Right cardiac atrium (tissue), 5 donors: ENCODE measurements at regions of chr11 and their contacts with region 1.

Region 1: GRCh38 chr11:111878849-111879636 is at the starts of genes CFAP68 and FDXACB1:
- DNase-seq: peak; percentile 96 to 98 (median 97)
- ATAC-seq: peak; percentile 97 to 98
- H3K4me3 ChIP-seq: peak within 1 kb of the TSS; percentile 64
- H3K27ac ChIP-seq: peak within 1 kb of the TSS; percentile 78
- H3K4me1 ChIP-seq: no peaks in the 10 kb centered on the region
- H3K27me3 ChIP-seq: no peaks in the 10 kb centered on the region
- total RNA-seq, gene CFAP68: 22.8 to 51.1 (median 32.0) TPM
- total RNA-seq, gene FDXACB1: 1.6 to 1.7 (median 1.6) TPM

Region 2: GRCh38 chr11:111911563-111912401 is 32.7 kb after region 1 on chr11 and contains the start of gene CRYAB:
- intact Hi-C with region 1: loop called in 1 of 4 experiments (anchors 5 kb)
- DNase-seq: peak; percentile 91 to 96 (median 95)
- ATAC-seq: peak; percentile 85 to 87
- H3K4me3 ChIP-seq: peak within 1 kb of the TSS; percentile 87
- H3K27ac ChIP-seq: peak within 1 kb of the TSS; percentile 96
- H3K4me1 ChIP-seq: no peaks in the 10 kb centered on the region
- H3K27me3 ChIP-seq: no peaks in the 10 kb centered on the region
- total RNA-seq, gene CRYAB: 4,923 to 5,929 (median 5,581) TPM

Region 3: DNA sequence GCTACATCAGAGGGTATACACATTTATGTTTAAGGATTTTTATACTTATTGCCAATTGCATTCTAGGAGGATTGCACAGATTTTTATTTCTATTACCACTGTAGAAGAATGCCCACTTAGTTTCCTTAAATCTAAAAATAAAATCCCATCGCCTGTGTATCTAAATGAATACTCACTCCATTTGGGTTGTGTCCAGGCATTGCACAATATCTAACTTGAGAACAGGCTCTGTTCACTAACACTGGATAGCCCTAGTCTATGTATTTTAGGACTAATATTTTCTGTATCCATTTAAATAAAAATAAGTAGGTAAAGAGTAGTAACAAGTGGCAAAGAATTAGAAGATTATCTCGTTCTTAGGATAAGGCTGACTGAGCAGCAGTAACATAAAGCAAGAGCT is 43.8 kb after region 1 on chr11:
- intact Hi-C with region 1: loop called in 1 of 4 experiments (anchors 5 kb)
- DNase-seq: no peak
- ATAC-seq: peak; percentile 17 to 19
- H3K4me3 ChIP-seq: peak overlapping the region; percentile 29
- H3K27ac ChIP-seq: peak overlapping the region; percentile 99
- H3K4me1 ChIP-seq: peaks cover 14% of the 10 kb centered on the region
- H3K27me3 ChIP-seq: no peaks in the 10 kb centered on the region

Region 4: DNA sequence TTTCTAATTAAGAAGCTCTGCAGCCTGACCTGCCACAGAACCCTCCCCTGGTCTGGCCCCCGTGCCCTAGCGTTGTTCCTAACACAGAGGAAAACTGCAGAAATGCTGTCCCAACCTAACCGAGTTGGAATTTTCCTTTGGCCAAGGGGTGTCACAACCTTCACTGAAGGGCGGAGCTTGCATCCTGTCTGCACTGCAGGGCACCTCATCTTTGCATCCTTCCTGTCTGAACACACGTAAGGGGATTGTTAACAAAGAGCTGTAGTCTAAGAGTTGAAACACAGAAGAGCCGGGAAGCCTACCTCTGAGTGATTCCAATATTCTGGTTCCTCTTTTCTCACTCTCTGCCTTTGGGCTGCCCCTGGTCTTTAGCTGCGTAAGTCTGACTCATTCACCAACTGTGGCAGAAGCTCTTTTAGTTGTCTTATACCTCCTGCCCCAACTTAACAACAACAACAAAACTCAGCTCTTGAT is 59.7 kb after region 1 on chr11:
- intact Hi-C with region 1: loop called in 2 of 4 experiments (anchors 10 kb)
- DNase-seq: no peak
- ATAC-seq: peak; percentile 7 to 64
- H3K4me3 ChIP-seq: no peak overlapping the region
- H3K27ac ChIP-seq: peak overlapping the region; percentile 40
- H3K4me1 ChIP-seq: peaks cover 15% of the 10 kb centered on the region
- H3K27me3 ChIP-seq: no peaks in the 10 kb centered on the region

Region 5: GRCh38 chr11:111982019-111982464 is 103.0 kb after region 1 on chr11:
- intact Hi-C with region 1: loop called in 3 of 4 experiments (anchors 5 kb)
- DNase-seq: peak; percentile 31 to 74 (median 57)
- ATAC-seq: peak in 1 of 2 donors; percentile 30
- H3K4me3 ChIP-seq: no peak overlapping the region
- H3K27ac ChIP-seq: no peak overlapping the region
- H3K4me1 ChIP-seq: peaks cover 1% of the 10 kb centered on the region
- H3K27me3 ChIP-seq: no peaks in the 10 kb centered on the region